ENCODE measurements at regions of chr2 and their contacts with region 1.

Region 1: GRCh38 chr2:173402405-173402974 is 47.8 kb downstream of the CDCA7 start:
- DNase-seq: peak; percentile 71
- H3K4me3 ChIP-seq: peak overlapping the region; percentile 48
- H3K27ac ChIP-seq: peak overlapping the region; percentile 23
- H3K4me1 ChIP-seq: peaks cover 14% of the 10 kb centered on the region
- H3K27me3 ChIP-seq: peaks cover 42% of the 10 kb centered on the region
- CTCF ChIP-seq: peak; percentile 87

Region 2: DNA sequence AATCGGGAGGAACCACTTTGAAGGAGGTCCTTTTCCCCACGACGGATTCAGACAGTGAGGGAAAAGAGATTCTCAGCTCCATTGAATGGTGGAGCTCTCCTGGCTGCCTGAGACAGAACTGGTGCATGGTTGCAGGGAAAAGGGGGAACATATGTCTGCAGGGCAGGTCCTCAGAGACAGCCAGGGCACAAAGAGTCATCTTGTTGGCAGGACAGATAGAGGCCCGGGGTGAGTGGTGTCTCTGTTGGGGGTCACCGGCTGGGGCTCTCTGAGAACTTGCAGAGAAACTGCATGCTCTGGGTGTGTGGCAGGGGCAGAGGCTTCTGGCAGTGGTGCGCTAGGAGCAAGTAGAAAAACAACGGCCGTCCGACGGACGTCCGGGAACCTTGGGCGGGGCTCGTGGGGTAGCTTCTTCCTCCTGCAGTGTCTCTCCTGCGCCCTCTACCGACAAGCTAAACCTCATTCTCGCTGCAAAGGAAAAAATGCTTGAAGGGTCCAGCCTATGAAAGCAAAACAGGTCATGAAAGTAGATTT is 46.5 kb after region 1 on chr2:
- intact Hi-C with region 1: loop called (anchors 5 kb)
- DNase-seq: peak; percentile 81
- H3K4me3 ChIP-seq: peak overlapping the region; percentile 56
- H3K27ac ChIP-seq: peak overlapping the region; percentile 78
- H3K4me1 ChIP-seq: no peaks in the 10 kb centered on the region
- H3K27me3 ChIP-seq: peaks cover 5% of the 10 kb centered on the region
- CTCF ChIP-seq: peak; percentile 79

Region 3: GRCh38 chr2:173537694-173538093 is 135.2 kb after region 1 on chr2:
- intact Hi-C with region 1: no loop called
- DNase-seq: no peak
- H3K4me3 ChIP-seq: no peak overlapping the region
- H3K27ac ChIP-seq: no peak overlapping the region
- H3K4me1 ChIP-seq: no peaks in the 10 kb centered on the region
- H3K27me3 ChIP-seq: peaks cover 28% of the 10 kb centered on the region
- CTCF ChIP-seq: no peak

Region 4: GRCh38 chr2:173571021-173571882 is 168.8 kb after region 1 on chr2:
- intact Hi-C with region 1: loop called (anchors 10 kb)
- DNase-seq: no peak
- H3K4me3 ChIP-seq: no peak overlapping the region
- H3K27ac ChIP-seq: no peak overlapping the region
- H3K4me1 ChIP-seq: peaks cover 6% of the 10 kb centered on the region
- H3K27me3 ChIP-seq: no peaks in the 10 kb centered on the region
- CTCF ChIP-seq: peak; percentile 59